Caco-2 (cell line): ENCODE measurements at regions of chr1 and their contacts with region 1.

Region 1: GRCh38 chr1:186605762-186606350 is 74.4 kb downstream of the PTGS2 start:
- DNase-seq: peak; percentile 70 to 72
- H3K4me3 ChIP-seq: no peak overlapping the region
- H3K4me3 Mint-ChIP-seq: no peak overlapping the region
- H3K27ac Mint-ChIP-seq: peak overlapping the region; percentile 43
- H3K4me1 ChIP-seq: peaks cover 16% of the 10 kb centered on the region
- H3K4me1 Mint-ChIP-seq: peaks cover 9% of the 10 kb centered on the region
- H3K27me3 ChIP-seq: no peaks in the 10 kb centered on the region
- H3K27me3 Mint-ChIP-seq: no peaks in the 10 kb centered on the region
- CTCF ChIP-seq: peak; percentile 70 to 71

Region 2: DNA sequence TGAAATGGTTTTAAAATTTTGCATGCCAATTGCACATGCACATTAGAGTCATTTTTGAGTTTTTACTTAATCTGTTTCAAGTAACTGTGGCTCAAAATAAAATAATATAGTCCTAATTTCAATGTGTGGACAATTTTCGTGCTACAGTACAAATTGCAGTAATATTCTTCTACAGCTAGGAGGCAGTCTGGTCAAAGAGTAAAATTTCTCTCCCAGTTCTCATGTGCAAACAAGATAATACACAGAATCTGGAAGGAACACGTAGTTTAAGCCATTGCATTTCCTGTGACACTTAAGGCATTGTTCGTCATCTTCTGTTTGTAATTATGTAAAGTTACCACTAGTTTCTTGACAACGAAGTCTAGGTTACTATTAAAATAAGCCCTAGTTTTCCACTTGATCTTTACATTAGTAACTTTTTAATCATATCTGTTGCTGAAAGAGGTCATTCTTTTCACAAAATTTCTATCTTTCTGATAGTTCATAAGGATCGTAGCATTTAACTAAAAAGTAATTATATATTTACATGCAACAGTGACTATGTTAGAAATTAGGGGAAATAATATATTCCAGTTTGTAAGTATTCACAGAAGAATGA is 201.3 kb before region 1 on chr1:
- CTCF ChIA-PET with region 1: interaction called, 3 read pairs
- POLR2A ChIA-PET with region 1: no interaction called
- intact Hi-C with region 1: loop called (anchors 1 kb)
- DNase-seq: peak in 1 of 2 experiments; percentile 43
- H3K4me3 ChIP-seq: no peak overlapping the region
- H3K4me3 Mint-ChIP-seq: no peak overlapping the region
- H3K27ac Mint-ChIP-seq: no peak overlapping the region
- H3K4me1 ChIP-seq: no peaks in the 10 kb centered on the region
- H3K4me1 Mint-ChIP-seq: peaks cover 6% of the 10 kb centered on the region
- H3K27me3 ChIP-seq: no peaks in the 10 kb centered on the region
- H3K27me3 Mint-ChIP-seq: no peaks in the 10 kb centered on the region
- CTCF ChIP-seq: peak; percentile 58 to 63

Region 3: GRCh38 chr1:186574951-186575747 is 30.7 kb before region 1 on chr1:
- CTCF ChIA-PET with region 1: no interaction called
- POLR2A ChIA-PET with region 1: no interaction called
- intact Hi-C with region 1: no loop called
- DNase-seq: no peak
- H3K4me3 ChIP-seq: no peak overlapping the region
- H3K4me3 Mint-ChIP-seq: no peak overlapping the region
- H3K27ac Mint-ChIP-seq: no peak overlapping the region
- H3K4me1 ChIP-seq: peaks cover 22% of the 10 kb centered on the region
- H3K4me1 Mint-ChIP-seq: no peaks in the 10 kb centered on the region
- H3K27me3 ChIP-seq: no peaks in the 10 kb centered on the region
- H3K27me3 Mint-ChIP-seq: no peaks in the 10 kb centered on the region
- CTCF ChIP-seq: no peak

Region 4: GRCh38 chr1:186812570-186812969 is 206.7 kb after region 1 on chr1:
- CTCF ChIA-PET with region 1: no interaction called
- POLR2A ChIA-PET with region 1: no interaction called
- intact Hi-C with region 1: no loop called
- DNase-seq: no peak
- H3K4me3 ChIP-seq: no peak overlapping the region
- H3K4me3 Mint-ChIP-seq: no peak overlapping the region
- H3K27ac Mint-ChIP-seq: no peak overlapping the region
- H3K4me1 ChIP-seq: no peaks in the 10 kb centered on the region
- H3K4me1 Mint-ChIP-seq: no peaks in the 10 kb centered on the region
- H3K27me3 ChIP-seq: no peaks in the 10 kb centered on the region
- H3K27me3 Mint-ChIP-seq: peaks cover 2% of the 10 kb centered on the region
- CTCF ChIP-seq: no peak